Dendritic cell treated with granulocyte-macrophage colony-stimulating factor and Interleukin-4, amounts not matched to agents 40 ng/mL and 50 ng/mL, for 4 days (primary cell): ENCODE measurements at regions of chr6 and their contacts with region 1.

Region 1: DNA sequence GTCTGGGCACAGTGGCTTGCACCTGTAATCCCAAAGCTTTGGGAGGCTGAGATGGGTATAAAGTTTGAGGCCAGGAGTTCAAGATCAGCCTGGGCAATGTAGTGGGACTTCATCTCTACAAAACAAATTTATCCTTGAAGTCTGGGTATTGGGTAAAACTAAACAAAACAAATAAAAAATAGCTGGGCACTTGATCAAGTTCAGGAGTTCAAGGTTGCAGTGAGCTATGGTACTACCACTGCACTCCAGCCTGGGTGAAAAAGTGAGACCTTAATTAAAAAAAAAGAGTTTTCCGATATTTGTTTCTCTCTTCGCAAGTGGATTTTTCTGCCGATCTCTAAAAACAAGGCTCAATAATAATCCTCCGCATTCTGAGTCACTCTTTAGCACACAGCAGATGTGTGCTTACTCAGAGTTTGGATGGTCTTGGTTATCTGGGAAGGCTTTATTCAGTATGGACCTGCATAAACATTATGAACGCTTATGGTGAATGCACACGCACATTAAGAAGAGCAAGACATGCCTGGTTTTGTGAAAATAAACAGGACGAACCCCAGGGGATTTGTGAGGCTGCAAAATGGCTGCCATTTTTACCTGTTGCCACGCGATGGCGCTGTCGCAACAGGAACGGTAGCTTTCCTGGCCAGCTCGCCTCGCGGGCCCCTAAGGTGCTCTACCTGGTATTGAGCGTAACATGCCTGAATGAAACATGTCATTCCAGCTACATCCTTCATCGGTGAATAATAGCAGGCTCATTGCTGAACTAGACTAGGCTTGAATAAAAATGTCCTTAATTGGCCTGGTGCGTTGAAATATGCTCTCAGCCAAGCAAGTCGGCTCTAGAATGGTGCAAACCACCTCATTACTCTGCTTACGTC is 6.0 kb downstream of the OPN5 start:
- H3K4me3 Mint-ChIP-seq: no peak overlapping the region
- H3K27ac Mint-ChIP-seq: no peak overlapping the region
- H3K4me1 Mint-ChIP-seq: no peaks in the 10 kb centered on the region
- H3K27me3 Mint-ChIP-seq: peaks cover 19% of the 10 kb centered on the region

Region 2: DNA sequence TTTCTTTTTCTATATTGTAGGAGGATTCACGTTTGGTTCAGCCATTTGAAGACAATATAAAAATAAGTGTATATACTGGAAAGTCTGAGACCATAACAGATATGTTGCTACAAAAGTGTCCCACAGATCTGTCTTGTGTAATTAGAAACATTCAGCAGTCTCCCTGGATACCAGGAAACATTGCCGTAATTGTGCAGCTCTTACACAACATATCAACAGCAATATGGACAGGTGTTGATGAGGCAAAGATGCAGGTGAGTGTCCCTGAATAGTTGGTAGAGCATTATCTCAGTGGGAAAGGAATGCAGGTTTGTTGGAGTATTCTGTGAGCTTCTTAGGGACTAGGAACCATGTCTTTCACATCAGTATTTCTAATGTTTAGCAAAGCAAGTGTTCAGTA is 107.8 kb before region 1 on chr6:
- intact Hi-C with region 1: no loop called
- H3K4me3 Mint-ChIP-seq: no peak overlapping the region
- H3K27ac Mint-ChIP-seq: no peak overlapping the region
- H3K4me1 Mint-ChIP-seq: no peaks in the 10 kb centered on the region
- H3K27me3 Mint-ChIP-seq: no peaks in the 10 kb centered on the region

Region 3: GRCh38 chr6:48765352-48765961 is 977.6 kb after region 1 on chr6:
- intact Hi-C with region 1: loop called (anchors 5 kb)
- H3K4me3 Mint-ChIP-seq: no peak overlapping the region
- H3K27ac Mint-ChIP-seq: no peak overlapping the region
- H3K4me1 Mint-ChIP-seq: no peaks in the 10 kb centered on the region
- H3K27me3 Mint-ChIP-seq: no peaks in the 10 kb centered on the region

Region 4: DNA sequence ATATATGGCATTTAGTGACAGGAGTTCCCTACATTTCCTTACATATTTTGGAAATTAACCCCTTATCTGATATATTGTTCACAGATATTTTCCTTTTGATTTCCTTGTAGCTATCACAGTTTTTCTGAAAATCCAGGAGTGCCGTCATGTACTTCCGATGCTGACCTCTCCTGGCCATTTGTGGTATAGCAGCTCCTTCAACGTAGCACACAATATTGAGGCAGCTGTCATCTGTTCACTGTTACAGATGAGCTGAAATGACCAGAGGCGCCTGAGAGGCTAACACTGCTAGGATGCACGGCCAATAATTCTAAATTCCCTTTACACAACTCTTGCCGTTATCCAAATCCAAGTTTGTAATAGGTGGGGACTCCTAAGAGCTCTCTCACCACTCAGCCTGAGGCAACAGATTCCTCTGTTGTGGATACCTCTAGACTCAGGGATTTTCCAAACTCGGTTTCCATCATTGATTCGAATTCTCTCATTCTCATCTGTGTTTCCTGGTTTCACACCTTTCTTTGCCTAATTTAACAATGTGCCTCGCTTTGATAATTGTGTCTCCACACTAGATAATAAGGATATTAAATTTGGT is 1622.2 kb after region 1 on chr6:
- intact Hi-C with region 1: loop called (anchors 1 kb)
- H3K4me3 Mint-ChIP-seq: no peak overlapping the region
- H3K27ac Mint-ChIP-seq: no peak overlapping the region
- H3K4me1 Mint-ChIP-seq: no peaks in the 10 kb centered on the region
- H3K27me3 Mint-ChIP-seq: no peaks in the 10 kb centered on the region